Activated naive CD4-positive, alpha-beta T cell treated with anti-CD3 and anti-CD28 coated beads for 36 hours (primary cell): ENCODE measurements at regions of chr12 and their contacts with region 1.

Region 1: GRCh38 chr12:124567661-124568373 is 405 bp upstream of the NCOR2 start:
- DNase-seq: peak; percentile 77
- H3K4me3 Mint-ChIP-seq: peak overlapping the region; percentile 80
- H3K27ac Mint-ChIP-seq: peak overlapping the region; percentile 87
- H3K4me1 Mint-ChIP-seq: peaks cover 33% of the 10 kb centered on the region
- H3K27me3 Mint-ChIP-seq: no peaks in the 10 kb centered on the region

Region 2: DNA sequence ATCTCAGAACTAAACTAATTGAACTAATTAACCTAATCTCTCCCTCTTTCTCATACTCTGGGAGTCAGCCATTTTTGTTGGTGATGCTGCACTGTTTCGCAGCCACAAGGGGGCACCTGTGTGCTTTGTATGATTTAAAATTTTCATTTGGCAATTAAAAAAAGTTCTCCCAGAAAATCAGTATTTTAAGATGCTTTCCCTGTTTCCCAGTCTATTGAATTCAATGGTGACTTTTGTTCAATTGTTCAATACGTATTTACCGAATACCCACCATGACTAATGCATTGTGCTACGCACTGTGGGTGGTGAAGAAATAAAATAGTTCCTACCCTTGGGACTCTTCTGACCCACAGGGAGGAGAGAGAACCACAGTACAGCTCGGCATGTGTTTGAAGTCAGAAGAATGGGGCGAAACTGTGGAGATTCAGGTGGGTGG is 531.1 kb before region 1 on chr12:
- CTCF ChIA-PET with region 1: no interaction called
- intact Hi-C with region 1: loop called (anchors 10 kb)
- DNase-seq: peak; percentile 59
- H3K4me3 Mint-ChIP-seq: no peak overlapping the region
- H3K27ac Mint-ChIP-seq: no peak overlapping the region
- H3K4me1 Mint-ChIP-seq: no peaks in the 10 kb centered on the region
- H3K27me3 Mint-ChIP-seq: peaks cover 2% of the 10 kb centered on the region

Region 3: DNA sequence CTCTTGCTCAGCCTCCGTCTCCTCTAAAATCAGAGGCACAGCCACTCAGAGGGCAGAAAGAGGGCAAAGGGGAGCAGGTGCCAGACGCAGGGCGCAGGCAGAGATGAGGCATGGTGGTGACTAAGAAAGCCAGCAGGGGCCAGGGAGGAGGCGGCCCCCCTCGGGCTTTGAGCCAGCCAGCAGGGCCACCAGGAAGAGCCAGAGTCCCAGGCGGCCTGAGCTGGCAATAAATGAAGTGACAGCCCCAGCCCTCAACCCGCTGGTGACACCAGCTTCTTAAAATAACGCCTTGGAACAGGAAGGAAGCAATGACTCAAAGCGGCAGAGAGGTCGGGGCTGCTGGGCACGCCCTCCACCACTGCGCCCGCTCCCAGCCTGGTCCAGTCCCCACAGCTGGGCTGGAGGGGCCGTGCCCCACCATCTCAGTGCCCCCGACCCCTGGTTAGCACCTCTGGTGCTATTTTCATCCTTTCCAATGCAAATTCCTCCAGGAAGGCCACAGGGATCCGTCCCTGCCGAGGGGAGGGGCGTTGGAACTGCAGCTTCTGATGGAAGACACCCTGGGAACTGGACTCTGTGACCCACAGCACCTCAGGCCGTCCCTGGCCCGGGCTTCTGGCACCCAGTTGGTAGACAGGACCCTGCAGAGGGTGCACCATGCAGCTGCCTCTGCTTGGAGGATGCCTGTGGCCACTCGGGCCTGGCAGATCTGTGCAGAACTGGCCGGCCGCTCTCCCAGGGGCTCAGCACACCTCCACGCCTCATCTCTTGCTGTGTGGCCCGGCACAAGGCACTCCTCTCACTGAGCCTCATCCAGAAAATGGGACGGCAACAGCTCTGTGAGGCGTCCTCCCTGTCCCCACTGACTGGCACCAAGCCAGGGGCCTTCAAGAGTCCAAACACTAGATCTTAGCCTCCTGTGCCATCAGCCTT is 114.1 kb before region 1 on chr12:
- CTCF ChIA-PET with region 1: no interaction called
- intact Hi-C with region 1: loop called (anchors 1 kb)
- DNase-seq: peak; percentile 93
- H3K4me3 Mint-ChIP-seq: no peak overlapping the region
- H3K27ac Mint-ChIP-seq: no peak overlapping the region
- H3K4me1 Mint-ChIP-seq: peaks cover 57% of the 10 kb centered on the region
- H3K27me3 Mint-ChIP-seq: no peaks in the 10 kb centered on the region

Region 4: GRCh38 chr12:124636138-124636978 is 68.5 kb after region 1 on chr12:
- CTCF ChIA-PET with region 1: no interaction called
- intact Hi-C with region 1: loop called (anchors 1 kb)
- DNase-seq: peak; percentile 89
- H3K4me3 Mint-ChIP-seq: no peak overlapping the region
- H3K27ac Mint-ChIP-seq: no peak overlapping the region
- H3K4me1 Mint-ChIP-seq: peaks cover 20% of the 10 kb centered on the region
- H3K27me3 Mint-ChIP-seq: no peaks in the 10 kb centered on the region

Region 5: DNA sequence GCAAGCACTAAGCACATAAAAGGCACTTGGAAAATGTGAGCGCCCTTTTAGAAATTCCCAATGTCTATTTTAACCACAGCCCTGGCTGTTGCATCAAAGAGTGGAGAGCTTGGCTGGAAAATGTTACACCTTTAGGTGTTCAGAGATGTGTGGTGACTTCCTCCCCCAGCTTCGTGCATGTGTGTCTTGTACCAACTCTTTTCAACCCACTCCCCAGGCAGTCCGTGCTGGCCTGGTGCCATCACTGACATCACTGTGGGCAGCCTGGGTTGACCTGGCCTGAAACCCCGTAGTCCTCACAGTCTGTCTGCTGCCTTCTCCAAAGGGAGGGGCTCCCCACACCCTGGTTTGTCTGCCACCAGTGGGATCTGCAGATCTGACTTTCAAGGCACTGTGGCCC is 194.1 kb after region 1 on chr12:
- CTCF ChIA-PET with region 1: interaction called, 6 read pairs
- intact Hi-C with region 1: loop called (anchors 2 kb)
- DNase-seq: peak; percentile 59
- H3K4me3 Mint-ChIP-seq: no peak overlapping the region
- H3K27ac Mint-ChIP-seq: no peak overlapping the region
- H3K4me1 Mint-ChIP-seq: peaks cover 36% of the 10 kb centered on the region
- H3K27me3 Mint-ChIP-seq: peaks cover 5% of the 10 kb centered on the region

Region 6: DNA sequence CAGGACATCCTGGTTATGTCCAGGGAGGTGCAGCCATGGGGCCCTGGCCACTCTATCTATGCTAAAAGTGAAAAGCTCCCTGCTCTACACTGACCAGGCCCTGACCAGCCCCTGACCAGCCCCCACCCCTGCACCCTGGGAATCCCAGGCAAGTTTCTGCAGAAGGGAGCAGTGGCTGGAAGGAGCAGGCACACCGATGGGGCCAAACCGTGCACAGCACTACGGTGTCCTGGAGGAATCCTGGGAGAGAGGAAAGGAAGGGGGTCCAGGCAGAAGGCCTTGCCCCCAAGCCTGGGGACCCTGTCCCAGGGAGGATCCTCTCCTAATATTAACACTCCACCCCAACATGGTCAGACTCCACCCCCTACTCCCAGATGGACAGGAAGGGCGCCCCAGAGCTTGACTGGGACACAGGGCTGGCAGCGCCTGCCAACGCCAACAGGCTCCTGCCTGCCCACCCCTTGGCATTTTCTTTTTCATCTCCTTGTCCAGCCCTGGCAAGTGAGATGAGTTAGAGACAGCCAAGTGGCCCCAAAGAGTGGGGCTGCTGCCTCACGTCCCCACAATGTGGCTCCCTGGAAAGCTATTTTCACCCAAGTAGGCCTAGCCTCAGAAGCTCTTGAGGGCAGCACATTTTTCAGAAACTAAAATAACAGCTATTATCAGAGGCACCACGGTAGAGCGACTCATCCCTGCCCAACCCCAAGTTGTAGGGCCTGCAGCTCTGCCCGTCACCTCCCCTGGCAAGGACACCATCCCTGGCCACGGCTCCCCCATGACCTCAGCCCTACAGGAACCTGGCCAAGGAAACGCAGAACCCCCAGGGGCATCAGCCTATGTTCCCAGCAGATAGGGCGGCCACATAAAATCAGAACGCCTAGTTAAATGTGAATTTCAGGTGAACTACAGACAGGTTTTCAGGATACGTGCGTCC is 213.2 kb after region 1 on chr12:
- CTCF ChIA-PET with region 1: no interaction called
- intact Hi-C with region 1: no loop called
- DNase-seq: no peak
- H3K4me3 Mint-ChIP-seq: no peak overlapping the region
- H3K27ac Mint-ChIP-seq: no peak overlapping the region
- H3K4me1 Mint-ChIP-seq: peaks cover 2% of the 10 kb centered on the region
- H3K27me3 Mint-ChIP-seq: no peaks in the 10 kb centered on the region

Region 7: DNA sequence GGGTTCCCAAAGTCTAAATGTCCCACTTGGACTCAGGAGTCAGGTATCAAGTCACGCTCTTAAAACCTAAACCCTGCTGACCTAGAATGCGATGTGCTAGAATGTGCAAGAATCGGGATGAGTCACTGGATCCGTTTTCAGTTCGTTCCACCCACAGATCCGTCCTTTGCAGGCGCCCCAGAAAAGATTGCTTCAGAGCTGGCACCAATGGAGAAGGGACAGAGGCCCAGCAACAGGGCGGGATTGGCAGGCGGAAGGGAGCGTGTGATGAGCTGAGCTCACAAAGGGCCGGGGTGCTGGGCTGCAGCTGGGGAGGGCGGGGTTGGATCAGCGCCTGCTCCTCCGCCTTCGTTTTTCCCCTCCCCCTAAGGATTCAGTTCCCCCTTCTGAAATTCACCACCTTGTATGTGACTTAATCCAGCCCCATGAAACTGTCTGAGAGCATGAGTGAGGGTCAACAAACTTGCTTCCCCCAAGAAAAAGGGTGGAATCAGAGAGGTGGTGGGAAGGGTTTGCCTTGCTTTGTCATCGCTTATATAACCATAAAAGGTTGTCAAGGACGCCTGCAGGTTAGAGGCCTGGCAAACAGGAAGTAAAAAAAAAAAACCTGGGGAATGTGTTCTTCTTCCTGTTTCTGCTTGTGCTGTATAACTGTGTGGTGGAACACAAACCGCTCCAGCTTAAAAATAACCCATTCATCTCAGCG is 349.5 kb after region 1 on chr12:
- CTCF ChIA-PET with region 1: no interaction called
- intact Hi-C with region 1: loop called (anchors 5 kb)
- DNase-seq: peak; percentile 98
- H3K4me3 Mint-ChIP-seq: peak overlapping the region; percentile 73
- H3K27ac Mint-ChIP-seq: peak overlapping the region; percentile 100
- H3K4me1 Mint-ChIP-seq: peaks cover 83% of the 10 kb centered on the region
- H3K27me3 Mint-ChIP-seq: peaks cover 6% of the 10 kb centered on the region